H1 (cell line): ENCODE measurements at regions of chr2 and their contacts with region 1.

Region 1: GRCh38 chr2:171086352-171087290 is 74.1 kb downstream of the TLK1 start:
- DNase-seq: peak in 1 of 2 experiments; percentile 34
- H3K4me3 ChIP-seq: no peak overlapping the region
- H3K27ac ChIP-seq: no peak overlapping the region
- H3K4me1 ChIP-seq: peaks cover 0 to 5% (median 0%) of the 10 kb centered on the region in 4 experiments; a peak in 2 of 7 replicates
- H3K27me3 ChIP-seq: no peaks in the 10 kb centered on the region
- CTCF ChIP-seq: peak in 2 of 3 experiments; percentile 48 to 79; a peak in 2 of 4 replicates
- EP300 ChIP-seq: no peak
- POLR2A ChIP-seq: no peak
- RAD21 ChIP-seq: peak; percentile 40 to 53

Region 2: GRCh38 chr2:171042253-171042969 is 44.2 kb before region 1 on chr2:
- CTCF ChIA-PET with region 1: no interaction called
- POLR2A ChIA-PET with region 1: no interaction called
- DNase-seq: no peak
- H3K4me3 ChIP-seq: no peak overlapping the region
- H3K27ac ChIP-seq: no peak overlapping the region
- H3K4me1 ChIP-seq: peaks cover 0 to 10% (median 2%) of the 10 kb centered on the region in 4 experiments; a peak in 2 of 7 replicates
- H3K27me3 ChIP-seq: no peaks in the 10 kb centered on the region
- CTCF ChIP-seq: no peak
- EP300 ChIP-seq: no peak
- POLR2A ChIP-seq: no peak
- RAD21 ChIP-seq: no peak

Region 3: DNA sequence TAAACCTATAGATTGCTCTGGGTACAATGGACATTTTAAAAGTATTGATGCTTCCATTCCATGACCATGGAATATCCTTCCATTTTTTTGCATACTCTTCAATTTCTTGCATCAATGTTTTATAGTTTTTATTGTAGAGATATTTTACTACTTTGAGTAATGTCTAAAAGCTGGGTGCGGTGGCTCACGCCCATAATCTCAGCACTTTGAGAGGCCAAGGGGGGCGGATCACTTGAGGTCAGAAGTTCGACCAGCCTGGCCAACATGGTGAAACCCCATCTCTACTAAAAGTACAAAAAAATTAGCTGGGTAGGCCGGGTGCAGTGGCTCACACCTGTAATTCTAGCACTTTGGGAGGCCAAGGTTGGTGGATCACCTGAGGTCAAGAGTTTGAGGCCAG is 14.5 kb before region 1 on chr2:
- CTCF ChIA-PET with region 1: interaction called, 17 read pairs
- POLR2A ChIA-PET with region 1: interaction called, 3 read pairs
- DNase-seq: no peak
- H3K4me3 ChIP-seq: no peak overlapping the region
- H3K27ac ChIP-seq: no peak overlapping the region
- H3K4me1 ChIP-seq: no peaks in the 10 kb centered on the region
- H3K27me3 ChIP-seq: no peaks in the 10 kb centered on the region
- CTCF ChIP-seq: no peak
- EP300 ChIP-seq: no peak
- POLR2A ChIP-seq: no peak
- RAD21 ChIP-seq: no peak

Region 4: GRCh38 chr2:171109571-171109970 is 22.9 kb after region 1 on chr2:
- CTCF ChIA-PET with region 1: interaction called, 17 read pairs
- POLR2A ChIA-PET with region 1: no interaction called
- DNase-seq: no peak
- H3K4me3 ChIP-seq: no peak overlapping the region
- H3K27ac ChIP-seq: no peak overlapping the region
- H3K4me1 ChIP-seq: peaks cover 0 to 3% (median 0%) of the 10 kb centered on the region in 4 experiments; a peak in 1 of 7 replicates
- H3K27me3 ChIP-seq: no peaks in the 10 kb centered on the region
- CTCF ChIP-seq: no peak
- EP300 ChIP-seq: no peak
- POLR2A ChIP-seq: no peak
- RAD21 ChIP-seq: no peak

Region 5: DNA sequence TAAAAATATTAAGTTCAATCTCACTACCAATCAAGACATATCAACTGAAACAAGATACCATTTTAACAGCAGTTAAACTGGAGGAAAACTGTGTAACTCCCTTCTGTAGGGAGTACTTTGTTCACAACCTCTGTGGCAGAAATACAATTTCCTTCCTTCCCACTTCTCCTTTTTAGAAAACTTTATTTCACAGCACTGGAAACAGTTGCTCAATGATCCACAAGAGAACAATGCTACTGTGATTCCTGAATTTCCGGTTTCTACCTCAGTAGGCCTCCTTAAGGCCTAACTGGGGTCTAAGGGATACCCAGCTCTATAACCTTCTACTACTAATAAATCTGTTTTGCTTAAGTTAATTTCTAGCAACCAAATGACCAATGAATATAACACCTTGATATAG is 60.0 kb after region 1 on chr2:
- CTCF ChIA-PET with region 1: interaction called, 11 read pairs
- POLR2A ChIA-PET with region 1: interaction called, 3 read pairs
- DNase-seq: no peak
- H3K4me3 ChIP-seq: no peak overlapping the region
- H3K27ac ChIP-seq: no peak overlapping the region
- H3K4me1 ChIP-seq: peaks cover 0 to 7% (median 4%) of the 10 kb centered on the region in 4 experiments; a peak in 3 of 7 replicates
- H3K27me3 ChIP-seq: no peaks in the 10 kb centered on the region
- CTCF ChIP-seq: no peak
- EP300 ChIP-seq: no peak
- POLR2A ChIP-seq: no peak
- RAD21 ChIP-seq: no peak

Region 6: GRCh38 chr2:171345971-171346716 is 259.5 kb after region 1 on chr2:
- CTCF ChIA-PET with region 1: no interaction called
- POLR2A ChIA-PET with region 1: no interaction called
- DNase-seq: no peak
- H3K4me3 ChIP-seq: no peak overlapping the region
- H3K27ac ChIP-seq: no peak overlapping the region
- H3K4me1 ChIP-seq: no peaks in the 10 kb centered on the region
- H3K27me3 ChIP-seq: no peaks in the 10 kb centered on the region
- CTCF ChIP-seq: no peak
- EP300 ChIP-seq: no peak
- POLR2A ChIP-seq: no peak
- RAD21 ChIP-seq: no peak